ENCODE measurements at regions of chr22 and their contacts with region 1.

Region 1: GRCh38 chr22:28120691-28121592 is 201.9 kb upstream of the PITPNB start:
- DNase-seq: no peak
- ATAC-seq: no peak
- H3K4me3 ChIP-seq: no peak overlapping the region
- H3K27ac ChIP-seq: no peak overlapping the region
- H3K4me1 ChIP-seq: no peaks in the 10 kb centered on the region
- H3K27me3 ChIP-seq: no peaks in the 10 kb centered on the region
- CTCF ChIP-seq: no peak
- EP300 ChIP-seq: no peak
- POLR2A ChIP-seq: no peak
- RAD21 ChIP-seq: no peak

Region 2: GRCh38 chr22:26681395-26681821 is 1439.5 kb before region 1 on chr22:
- CTCF ChIA-PET with region 1: no interaction called
- POLR2A ChIA-PET with region 1: no interaction called
- in situ Hi-C with region 1: no loop called
- intact Hi-C with region 1: loop called (anchors 10 kb)
- DNase-seq: no peak
- ATAC-seq: no peak
- H3K4me3 ChIP-seq: no peak overlapping the region
- H3K27ac ChIP-seq: no peak overlapping the region
- H3K4me1 ChIP-seq: no peaks in the 10 kb centered on the region
- H3K27me3 ChIP-seq: no peaks in the 10 kb centered on the region; a peak in 1 of 5 replicates
- CTCF ChIP-seq: no peak
- EP300 ChIP-seq: no peak
- POLR2A ChIP-seq: no peak
- RAD21 ChIP-seq: no peak

Region 3: DNA sequence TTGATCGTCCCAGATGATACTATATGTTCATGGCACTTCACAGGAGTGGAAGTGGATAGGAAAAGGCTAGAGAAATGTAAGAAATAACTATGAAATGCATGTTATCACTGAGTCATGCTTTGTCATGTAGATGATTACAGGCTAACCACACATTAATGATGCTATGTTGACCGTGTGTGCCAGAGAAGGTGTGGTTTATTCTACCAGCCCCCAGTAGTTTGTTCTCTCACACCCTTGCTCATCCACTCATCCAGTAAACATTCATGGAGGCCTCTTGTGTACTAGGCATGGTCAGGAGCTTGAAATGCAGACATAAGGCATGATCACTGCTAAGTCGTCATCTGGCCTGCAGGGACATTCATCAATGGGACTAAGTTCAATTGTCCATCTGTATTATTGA is 48.9 kb before region 1 on chr22:
- CTCF ChIA-PET with region 1: no interaction called
- POLR2A ChIA-PET with region 1: no interaction called
- in situ Hi-C with region 1: no loop called
- intact Hi-C with region 1: no loop called
- DNase-seq: no peak
- ATAC-seq: no peak
- H3K4me3 ChIP-seq: no peak overlapping the region
- H3K27ac ChIP-seq: no peak overlapping the region
- H3K4me1 ChIP-seq: peaks cover 19% of the 10 kb centered on the region
- H3K27me3 ChIP-seq: no peaks in the 10 kb centered on the region
- CTCF ChIP-seq: no peak
- EP300 ChIP-seq: no peak
- POLR2A ChIP-seq: no peak
- RAD21 ChIP-seq: no peak

Measured in HepG2 (cell line).